CD8-positive, alpha-beta T cell (primary cell): ENCODE measurements at regions of chr5 and their contacts with region 1.

Region 1: DNA sequence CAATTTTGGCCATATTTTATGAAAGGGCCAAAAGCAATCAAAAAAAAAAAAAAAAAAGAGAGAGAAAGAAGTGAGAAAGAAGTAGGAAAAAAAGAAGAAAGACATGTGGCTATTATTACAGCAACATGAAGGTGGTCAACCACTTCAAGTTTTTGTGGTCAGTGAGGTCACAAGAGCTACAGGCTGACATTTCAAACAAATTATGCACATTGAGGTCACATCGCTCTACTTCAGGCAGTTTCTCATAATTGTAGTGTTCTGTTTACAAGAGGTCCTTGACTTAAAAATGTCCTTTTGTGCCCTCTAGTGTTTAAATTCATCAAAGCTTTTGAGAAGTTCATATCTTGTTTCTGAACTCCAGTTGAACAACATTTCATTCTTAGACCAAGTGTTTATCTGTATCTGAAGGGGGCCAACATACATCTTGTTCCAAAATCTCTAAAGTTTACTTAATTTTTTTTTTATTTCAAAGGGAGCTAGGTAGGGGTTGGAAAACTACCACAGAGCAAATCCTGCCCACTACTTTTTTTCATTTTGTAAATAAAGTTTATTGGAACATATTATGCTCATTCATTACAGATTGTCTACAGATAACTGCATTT is 513.1 kb downstream of the PDE4D start:
- DNase-seq: peak in 2 of 9 experiments; percentile 57 to 67
- ATAC-seq: peak; percentile 54
- H3K4me3 ChIP-seq: no peak overlapping the region
- H3K4me3 Mint-ChIP-seq: no peak overlapping the region
- H3K27ac ChIP-seq: no peak overlapping the region
- H3K27ac Mint-ChIP-seq: no peak overlapping the region
- H3K4me1 ChIP-seq: no peaks in the 10 kb centered on the region
- H3K4me1 Mint-ChIP-seq: peaks cover 2% of the 10 kb centered on the region
- H3K27me3 ChIP-seq: no peaks in the 10 kb centered on the region
- H3K27me3 Mint-ChIP-seq: no peaks in the 10 kb centered on the region
- CTCF ChIP-seq: peak; percentile 50

Region 2: GRCh38 chr5:58871648-58872242 is 508.7 kb before region 1 on chr5:
- CTCF ChIA-PET with region 1: no interaction called
- POLR2A ChIA-PET with region 1: no interaction called
- intact Hi-C with region 1: loop called in 1 of 2 experiments (anchors 5 kb)
- DNase-seq: peak in 3 of 9 experiments; percentile 23 to 49 (median 33)
- ATAC-seq: no peak
- H3K4me3 ChIP-seq: no peak overlapping the region
- H3K4me3 Mint-ChIP-seq: no peak overlapping the region
- H3K27ac ChIP-seq: no peak overlapping the region
- H3K27ac Mint-ChIP-seq: no peak overlapping the region
- H3K4me1 ChIP-seq: no peaks in the 10 kb centered on the region
- H3K4me1 Mint-ChIP-seq: no peaks in the 10 kb centered on the region
- H3K27me3 ChIP-seq: no peaks in the 10 kb centered on the region
- H3K27me3 Mint-ChIP-seq: peaks cover 3% of the 10 kb centered on the region
- CTCF ChIP-seq: peak; percentile 86